Endothelial cell of umbilical vein (primary cell): ENCODE measurements at regions of chr4 and their contacts with region 1.

Region 1: GRCh38 chr4:173252024-173252935 is 81.9 kb downstream of the HMGB2 start:
- DNase-seq: peak; percentile 99
- H3K4me3 ChIP-seq: no peak overlapping the region
- H3K27ac ChIP-seq: peak overlapping the region; percentile 67
- H3K4me1 ChIP-seq: peaks cover 25% of the 10 kb centered on the region
- H3K27me3 ChIP-seq: no peaks in the 10 kb centered on the region
- CTCF ChIP-seq: no peak
- POLR2A ChIP-seq: peak; percentile 41

Region 2: GRCh38 chr4:173025131-173025530 is 227.1 kb before region 1 on chr4:
- CTCF ChIA-PET with region 1: interaction called, 67 read pairs
- POLR2A ChIA-PET with region 1: no interaction called
- dilution Hi-C with region 1: no loop called
- intact Hi-C with region 1: loop called (anchors 1 kb)
- DNase-seq: peak; percentile 38
- H3K4me3 ChIP-seq: no peak overlapping the region
- H3K27ac ChIP-seq: no peak overlapping the region
- H3K4me1 ChIP-seq: no peaks in the 10 kb centered on the region
- H3K27me3 ChIP-seq: no peaks in the 10 kb centered on the region
- CTCF ChIP-seq: peak; percentile 33 to 41
- POLR2A ChIP-seq: no peak

Region 3: GRCh38 chr4:173168396-173169177 is 83.7 kb before region 1 on chr4 and contains the start of gene GALNT7:
- CTCF ChIA-PET with region 1: interaction called, 26 read pairs
- POLR2A ChIA-PET with region 1: interaction called, 5 read pairs
- dilution Hi-C with region 1: no loop called
- intact Hi-C with region 1: loop called (anchors 1 kb)
- DNase-seq: peak; percentile 61
- H3K4me3 ChIP-seq: peak within 1 kb of the TSS; percentile 81 to 94 (median 83)
- H3K27ac ChIP-seq: peak within 1 kb of the TSS; percentile 62
- H3K4me1 ChIP-seq: peaks cover 23% of the 10 kb centered on the region
- H3K27me3 ChIP-seq: no peaks in the 10 kb centered on the region
- CTCF ChIP-seq: no peak
- POLR2A ChIP-seq: no peak
- total RNA-seq, gene GALNT7: 54.6 and 63.3 TPM in 2 replicates

Region 4: GRCh38 chr4:173192375-173193162 is 59.7 kb before region 1 on chr4:
- CTCF ChIA-PET with region 1: interaction called, 10 read pairs
- POLR2A ChIA-PET with region 1: no interaction called
- dilution Hi-C with region 1: no loop called
- intact Hi-C with region 1: loop called (anchors 2 kb)
- DNase-seq: peak; percentile 38
- H3K4me3 ChIP-seq: no peak overlapping the region
- H3K27ac ChIP-seq: no peak overlapping the region
- H3K4me1 ChIP-seq: peaks cover 19% of the 10 kb centered on the region
- H3K27me3 ChIP-seq: no peaks in the 10 kb centered on the region
- CTCF ChIP-seq: peak in 1 of 2 donors; percentile 26
- POLR2A ChIP-seq: no peak

Region 5: DNA sequence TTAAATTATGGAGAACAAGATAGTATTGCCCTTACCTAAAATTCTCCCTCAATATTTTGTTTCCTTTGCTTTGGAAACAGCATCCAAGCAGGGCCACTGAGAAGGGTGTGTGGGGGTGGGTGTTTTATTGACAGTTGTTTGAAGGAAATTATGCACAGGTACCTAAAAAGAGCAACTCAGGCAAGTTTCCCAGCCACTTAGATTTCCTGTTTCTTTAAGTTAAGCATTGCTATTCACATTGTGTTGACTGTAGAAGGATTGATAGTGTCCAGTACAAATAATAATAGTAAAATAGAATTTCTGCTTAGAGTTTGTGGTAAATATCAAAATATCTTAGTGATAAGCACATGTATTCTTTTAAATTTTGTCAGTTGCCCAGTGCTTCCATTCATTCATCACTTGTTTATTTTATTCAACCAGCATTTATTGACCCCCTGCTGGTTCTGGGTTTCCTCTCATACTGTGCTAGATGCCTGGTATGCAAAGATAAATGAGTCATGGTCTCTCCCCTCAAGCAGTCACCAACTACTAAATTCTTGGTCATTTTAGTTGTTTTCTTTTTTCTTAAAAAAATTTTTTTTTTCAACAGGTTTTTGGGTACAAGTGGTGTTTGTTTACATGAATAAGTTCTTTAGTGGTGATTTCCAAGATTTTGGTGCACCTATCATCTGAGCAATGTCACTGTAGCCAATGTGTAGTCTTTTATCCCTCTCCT is 33.7 kb before region 1 on chr4:
- CTCF ChIA-PET with region 1: no interaction called
- POLR2A ChIA-PET with region 1: no interaction called
- dilution Hi-C with region 1: no loop called
- intact Hi-C with region 1: loop called (anchors 2 kb)
- DNase-seq: peak; percentile 83
- H3K4me3 ChIP-seq: no peak overlapping the region
- H3K27ac ChIP-seq: peak overlapping the region; percentile 48
- H3K4me1 ChIP-seq: peaks cover 21% of the 10 kb centered on the region
- H3K27me3 ChIP-seq: no peaks in the 10 kb centered on the region
- CTCF ChIP-seq: no peak
- POLR2A ChIP-seq: no peak

Region 6: GRCh38 chr4:173334085-173334772 is 81.9 kb after region 1 on chr4 and contains the start of gene HMGB2:
- CTCF ChIA-PET with region 1: no interaction called
- POLR2A ChIA-PET with region 1: no interaction called
- dilution Hi-C with region 1: no loop called
- intact Hi-C with region 1: loop called (anchors 1 kb)
- DNase-seq: peak; percentile 100
- H3K4me3 ChIP-seq: peak within 1 kb of the TSS; percentile 81 to 98 (median 91)
- H3K27ac ChIP-seq: peak within 1 kb of the TSS; percentile 88
- H3K4me1 ChIP-seq: peaks cover 24% of the 10 kb centered on the region
- H3K27me3 ChIP-seq: no peaks in the 10 kb centered on the region
- CTCF ChIP-seq: no peak
- POLR2A ChIP-seq: peak; percentile 92
- total RNA-seq, gene HMGB2: 217 and 233 TPM in 2 replicates

Region 7: GRCh38 chr4:173413036-173413435 is 160.8 kb after region 1 on chr4:
- CTCF ChIA-PET with region 1: interaction called, 4 read pairs
- POLR2A ChIA-PET with region 1: no interaction called
- dilution Hi-C with region 1: no loop called
- intact Hi-C with region 1: loop called (anchors 1 kb)
- DNase-seq: peak; percentile 68
- H3K4me3 ChIP-seq: no peak overlapping the region
- H3K27ac ChIP-seq: no peak overlapping the region
- H3K4me1 ChIP-seq: peaks cover 24% of the 10 kb centered on the region
- H3K27me3 ChIP-seq: no peaks in the 10 kb centered on the region
- CTCF ChIP-seq: no peak
- POLR2A ChIP-seq: no peak